AG04449 (cell line): ENCODE measurements at regions of chr9 and their contacts with region 1.

Region 1: DNA sequence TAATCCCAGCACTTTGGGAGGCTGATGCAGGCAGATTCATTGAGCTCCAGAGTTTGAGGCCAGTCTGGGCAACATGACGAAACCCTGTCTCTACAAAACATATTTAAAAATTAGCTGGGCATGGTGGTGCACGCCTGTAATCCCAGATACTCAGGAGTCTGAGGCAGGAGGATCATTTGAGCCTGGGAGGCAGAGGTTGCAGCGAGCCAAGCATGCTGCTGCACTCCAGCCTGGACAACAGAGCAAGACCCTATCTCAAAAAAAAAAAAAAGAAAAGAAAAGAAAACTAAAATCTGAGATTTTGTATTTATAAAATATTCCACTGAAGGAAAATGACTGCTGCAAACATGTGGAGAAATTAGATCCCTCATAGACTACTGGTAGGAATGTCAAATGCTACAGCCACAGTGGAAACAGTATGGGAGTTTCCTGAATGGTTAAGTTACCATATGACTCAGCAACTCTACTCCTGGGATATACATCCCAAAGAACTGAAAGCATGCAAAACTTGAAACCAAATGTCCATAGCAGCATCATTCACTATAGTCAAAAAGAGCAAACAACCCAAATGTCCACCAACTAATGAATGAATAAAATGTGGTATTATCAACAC is 106.1 kb downstream of the UBAP2 start:
- DNase-seq: peak; percentile 71
- H3K4me3 ChIP-seq: no peak overlapping the region
- CTCF ChIP-seq: peak; percentile 66

Region 2: DNA sequence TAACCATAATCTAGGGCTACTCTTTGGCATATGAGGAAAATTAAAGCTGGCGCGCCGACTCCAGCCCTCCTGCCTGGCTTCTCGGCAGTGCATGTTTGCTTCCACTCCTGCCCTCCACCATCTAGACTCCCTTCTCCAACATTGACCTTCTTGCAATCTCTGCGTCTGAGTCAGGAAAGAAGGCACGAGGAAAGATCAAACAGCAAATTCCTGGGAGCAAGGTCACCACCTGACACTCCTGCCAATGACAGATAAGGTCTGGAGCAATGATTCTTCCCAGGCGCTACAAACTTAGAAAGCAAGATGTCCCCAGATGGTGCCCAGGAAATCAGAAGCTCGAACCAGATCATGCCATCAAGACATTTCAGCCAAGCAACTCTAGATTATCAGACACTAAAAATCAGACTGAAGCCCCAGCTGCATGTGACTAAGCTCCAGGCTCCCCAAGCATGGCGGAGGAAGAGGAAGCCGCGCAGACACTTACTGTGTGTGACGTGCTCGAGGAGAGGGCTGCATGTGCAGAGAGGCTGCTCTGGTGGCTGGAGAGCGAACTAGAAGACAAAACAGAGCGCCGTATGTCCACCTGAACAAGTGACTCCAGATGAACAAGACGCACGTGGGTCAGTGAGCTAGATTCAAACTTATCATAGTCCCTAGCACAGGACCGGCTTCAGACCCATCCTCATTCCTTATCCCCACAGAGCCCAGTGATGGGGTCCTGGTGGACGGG is 10.3 kb before region 1 on chr9:
- CTCF ChIA-PET with region 1: interaction called, 13 read pairs
- POLR2A ChIA-PET with region 1: no interaction called
- DNase-seq: no peak
- H3K4me3 ChIP-seq: no peak overlapping the region
- CTCF ChIP-seq: no peak